Sigmoid colon (tissue), 7 donors: ENCODE measurements at regions of chr11 and their contacts with region 1.

Region 1: DNA sequence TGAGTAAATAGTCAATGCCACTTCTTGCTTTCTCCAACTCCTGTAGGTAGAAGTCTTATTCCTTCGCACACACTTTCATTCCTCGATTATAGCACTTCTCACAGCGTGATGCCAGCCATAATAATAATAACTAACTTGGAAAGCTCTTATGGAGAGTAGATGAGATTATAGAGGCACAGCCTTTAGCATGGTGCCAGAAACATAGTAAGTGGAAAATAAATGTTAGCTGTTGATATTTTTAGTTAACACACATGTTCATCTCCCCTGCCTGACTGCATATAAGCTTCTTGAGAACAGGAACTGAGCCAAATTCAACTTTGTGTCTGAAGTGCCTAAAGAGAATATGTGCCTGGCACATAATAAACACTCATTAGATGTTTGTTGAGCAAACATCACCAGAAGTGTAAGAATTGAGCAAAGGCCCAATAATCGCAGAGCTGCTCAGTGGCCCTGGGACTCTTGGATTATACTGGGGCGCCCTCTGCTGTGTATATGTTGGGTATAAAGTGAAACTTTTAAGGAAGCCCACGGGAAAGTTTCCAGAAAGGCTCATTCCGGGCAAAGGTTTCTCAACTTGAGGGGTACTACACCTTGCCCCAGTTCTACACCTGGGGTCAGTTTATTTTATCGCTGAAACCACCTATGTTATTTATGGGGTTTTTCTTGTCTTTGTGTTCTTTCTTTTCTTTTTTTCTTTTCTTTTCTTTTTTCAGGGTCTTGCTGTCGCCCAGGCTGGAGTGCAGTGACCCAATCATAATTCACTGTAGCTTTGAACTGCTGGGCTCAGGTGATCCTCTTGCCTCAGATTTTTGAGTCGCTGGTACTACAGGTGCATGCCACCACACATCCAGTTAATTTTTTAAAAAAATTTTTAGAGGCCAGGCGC is 22.3 kb downstream of the SLN start:
- DNase-seq: peak; percentile 80
- H3K4me3 ChIP-seq: no peak overlapping the region
- H3K27ac ChIP-seq: no peak overlapping the region
- H3K4me1 ChIP-seq: peaks cover 0 to 8% (median 0%) of the 10 kb centered on the region in 4 donors
- H3K27me3 ChIP-seq: no peaks in the 10 kb centered on the region
- CTCF ChIP-seq: peak; percentile 44 to 63 (median 50)
- EP300 ChIP-seq: no peak
- POLR2A ChIP-seq: no peak

Region 2: GRCh38 chr11:107563702-107564101 is 125.9 kb before region 1 on chr11:
- intact Hi-C with region 1: loop called (anchors 5 kb)
- DNase-seq: no peak
- H3K4me3 ChIP-seq: no peak overlapping the region
- H3K27ac ChIP-seq: peak overlapping the region in 3 of 4 donors; percentile 33 to 85 (median 51)
- H3K4me1 ChIP-seq: peaks cover 0 to 26% (median 23%) of the 10 kb centered on the region in 4 donors
- H3K27me3 ChIP-seq: no peaks in the 10 kb centered on the region
- CTCF ChIP-seq: peak; percentile 7 to 49 (median 36)
- EP300 ChIP-seq: no peak
- POLR2A ChIP-seq: no peak

Region 3: GRCh38 chr11:107577346-107577711 is 112.2 kb before region 1 on chr11:
- intact Hi-C with region 1: loop called (anchors 5 kb)
- DNase-seq: no peak
- H3K4me3 ChIP-seq: no peak overlapping the region
- H3K27ac ChIP-seq: no peak overlapping the region
- H3K4me1 ChIP-seq: no peaks in the 10 kb centered on the region
- H3K27me3 ChIP-seq: no peaks in the 10 kb centered on the region
- CTCF ChIP-seq: no peak
- EP300 ChIP-seq: no peak
- POLR2A ChIP-seq: no peak